Adrenal gland (tissue), 19 donors: ENCODE measurements at regions of chr13 and their contacts with region 1.

Region 1: GRCh38 chr13:49976314-49977258 is 20.3 kb upstream of the TRIM13 start:
- DNase-seq: peak; percentile 39 to 87 (median 66)
- H3K4me3 ChIP-seq: no peak overlapping the region
- H3K27ac ChIP-seq: no peak overlapping the region
- H3K4me1 ChIP-seq: no peaks in the 10 kb centered on the region
- H3K27me3 ChIP-seq: no peaks in the 10 kb centered on the region
- CTCF ChIP-seq: peak; percentile 76 to 93 (median 84)
- POLR2A ChIP-seq: no peak

Region 2: DNA sequence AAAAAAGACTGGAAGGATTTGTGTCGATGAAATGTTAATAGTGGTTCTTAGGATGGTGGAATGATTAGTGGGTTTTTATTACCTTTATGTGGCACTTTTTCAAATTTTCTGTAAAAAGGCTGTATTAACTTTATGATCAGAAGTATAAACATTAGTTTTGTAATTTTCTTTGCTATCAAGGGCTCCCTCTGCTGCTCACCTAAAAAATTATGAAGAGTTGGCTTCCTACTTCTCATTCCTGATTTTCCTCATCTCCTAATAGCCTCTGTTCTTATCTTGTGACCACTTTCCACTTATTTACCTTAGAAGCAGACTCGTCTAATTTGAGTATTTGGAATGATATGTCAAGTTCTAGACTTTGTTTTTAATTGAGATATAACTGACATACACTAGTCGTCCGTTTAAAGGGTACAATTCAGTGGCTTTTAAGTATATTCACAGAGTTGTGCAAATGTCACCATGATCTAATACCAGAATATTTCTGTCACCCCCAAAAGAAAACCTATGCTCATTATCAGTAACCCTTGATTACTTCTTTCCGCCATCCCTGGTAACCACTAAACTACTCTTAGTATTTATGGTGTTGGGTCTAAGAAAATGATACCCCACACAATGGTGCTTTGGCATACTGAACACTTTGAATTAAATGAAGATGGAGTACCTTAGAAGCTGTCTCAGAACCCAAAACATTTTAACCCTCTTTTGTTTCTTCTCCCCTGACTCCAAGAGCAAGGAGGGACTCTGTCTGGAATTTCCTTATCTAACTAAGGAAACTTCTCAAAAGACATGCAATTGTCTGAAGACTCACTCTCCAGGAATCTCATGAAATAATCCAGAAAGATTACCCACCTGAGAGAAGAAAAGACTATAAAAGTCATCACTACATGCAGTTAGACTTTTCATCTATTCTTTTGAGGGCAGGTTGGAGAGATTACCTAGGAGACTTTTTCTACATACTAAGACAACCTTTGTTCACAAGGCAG is 555.6 kb after region 1 on chr13:
- intact Hi-C with region 1: loop called in 1 of 2 experiments (anchors 10 kb)
- DNase-seq: peak in 1 of 7 donors; percentile 22
- H3K4me3 ChIP-seq: no peak overlapping the region
- H3K27ac ChIP-seq: no peak overlapping the region
- H3K4me1 ChIP-seq: peaks cover 0 to 21% of the 10 kb centered on the region in 2 donors
- H3K27me3 ChIP-seq: no peaks in the 10 kb centered on the region
- CTCF ChIP-seq: peak; percentile 34 to 72 (median 64)
- POLR2A ChIP-seq: no peak

Region 3: GRCh38 chr13:50801087-50801931 is 824.7 kb after region 1 on chr13:
- intact Hi-C with region 1: loop called in 1 of 2 experiments (anchors 10 kb)
- DNase-seq: peak; percentile 48 to 82 (median 67)
- H3K4me3 ChIP-seq: no peak overlapping the region
- H3K27ac ChIP-seq: no peak overlapping the region
- H3K4me1 ChIP-seq: no peaks in the 10 kb centered on the region
- H3K27me3 ChIP-seq: no peaks in the 10 kb centered on the region
- CTCF ChIP-seq: peak; percentile 59 to 87 (median 78)
- POLR2A ChIP-seq: no peak

Region 4: DNA sequence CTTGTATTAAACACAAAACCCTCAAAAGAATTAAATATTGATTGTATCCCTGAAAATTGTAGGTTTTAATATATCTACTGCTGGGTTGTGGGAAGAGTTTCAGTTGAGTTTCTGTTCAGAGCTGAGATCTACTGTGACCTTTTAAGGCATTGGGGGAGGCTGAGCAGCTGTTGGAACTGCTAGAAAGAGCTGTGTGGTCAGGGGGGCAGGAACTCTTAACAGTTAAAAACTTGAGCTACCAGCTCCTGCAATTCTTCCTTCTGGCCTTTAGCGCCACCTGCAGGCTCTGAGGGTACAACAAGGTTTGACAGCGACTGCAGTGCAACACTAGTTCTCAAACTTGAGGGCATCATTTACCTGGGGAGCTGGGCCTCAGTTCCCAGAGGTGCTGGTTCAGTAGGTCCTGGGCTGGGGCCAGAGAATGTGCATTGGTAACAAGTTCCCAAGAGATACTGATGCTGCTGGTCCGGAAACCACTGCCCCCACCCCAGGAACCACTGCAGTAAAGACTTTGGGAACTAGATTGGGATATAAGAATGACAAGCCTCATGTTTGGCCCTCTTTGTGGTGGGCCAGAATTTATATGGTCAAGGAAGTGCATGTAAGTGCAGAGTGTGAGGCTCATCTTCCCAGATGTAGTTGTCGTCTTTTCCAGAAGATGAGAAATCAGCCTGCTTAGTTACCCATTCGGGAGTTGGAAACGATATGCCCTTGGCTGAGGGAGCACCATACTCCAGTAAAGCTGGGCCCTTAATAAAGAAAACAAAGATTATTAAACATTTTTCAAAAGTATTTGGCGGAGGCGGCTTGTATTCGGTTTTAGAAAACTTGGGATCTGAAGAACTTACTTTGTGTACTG is 935.6 kb after region 1 on chr13:
- intact Hi-C with region 1: loop called in 1 of 2 experiments (anchors 10 kb)
- DNase-seq: peak; percentile 77 to 92 (median 85)
- H3K4me3 ChIP-seq: no peak overlapping the region
- H3K27ac ChIP-seq: no peak overlapping the region
- H3K4me1 ChIP-seq: peaks cover 3 to 19% of the 10 kb centered on the region in 2 donors
- H3K27me3 ChIP-seq: no peaks in the 10 kb centered on the region
- CTCF ChIP-seq: peak; percentile 59 to 85 (median 76)
- POLR2A ChIP-seq: no peak